IMR-90 (cell line): ENCODE measurements at regions of chr17 and their contacts with region 1.

Region 1: GRCh38 chr17:29766796-29767327 is 144.2 kb upstream of the CORO6 start:
- DNase-seq: peak; percentile 5
- ATAC-seq: no peak; the same call in 1 of the 2 replicates
- H3K4me3 ChIP-seq: no peak overlapping the region
- H3K27ac ChIP-seq: no peak overlapping the region
- H3K4me1 ChIP-seq: no peaks in the 10 kb centered on the region
- H3K27me3 ChIP-seq: no peaks in the 10 kb centered on the region
- CTCF ChIP-seq: no peak
- POLR2A ChIP-seq: no peak
- RAD21 ChIP-seq: no peak

Region 2: GRCh38 chr17:29012535-29012934 is 754.3 kb before region 1 on chr17:
- CTCF ChIA-PET with region 1: no interaction called
- POLR2A ChIA-PET with region 1: no interaction called
- dilution Hi-C with region 1: no loop called
- in situ Hi-C with region 1: no loop called
- intact Hi-C with region 1: no loop called
- DNase-seq: no peak
- ATAC-seq: no peak
- H3K4me3 ChIP-seq: no peak overlapping the region
- H3K27ac ChIP-seq: no peak overlapping the region
- H3K4me1 ChIP-seq: no peaks in the 10 kb centered on the region
- H3K27me3 ChIP-seq: peaks cover 78% of the 10 kb centered on the region
- CTCF ChIP-seq: no peak
- POLR2A ChIP-seq: no peak
- RAD21 ChIP-seq: no peak

Region 3: GRCh38 chr17:30244853-30245385 is 478.1 kb after region 1 on chr17:
- CTCF ChIA-PET with region 1: no interaction called
- POLR2A ChIA-PET with region 1: no interaction called
- dilution Hi-C with region 1: no loop called
- in situ Hi-C with region 1: no loop called
- intact Hi-C with region 1: loop called (anchors 5 kb)
- DNase-seq: peak; percentile 89
- ATAC-seq: peak; percentile 81
- H3K4me3 ChIP-seq: no peak overlapping the region
- H3K27ac ChIP-seq: no peak overlapping the region
- H3K4me1 ChIP-seq: peaks cover 5% of the 10 kb centered on the region; the same call in 1 of the 2 replicates
- H3K27me3 ChIP-seq: no peaks in the 10 kb centered on the region
- CTCF ChIP-seq: no peak
- POLR2A ChIP-seq: no peak
- RAD21 ChIP-seq: no peak